RWPE1 (cell line): ENCODE measurements at regions of chr10 and their contacts with region 1.

Region 1: DNA sequence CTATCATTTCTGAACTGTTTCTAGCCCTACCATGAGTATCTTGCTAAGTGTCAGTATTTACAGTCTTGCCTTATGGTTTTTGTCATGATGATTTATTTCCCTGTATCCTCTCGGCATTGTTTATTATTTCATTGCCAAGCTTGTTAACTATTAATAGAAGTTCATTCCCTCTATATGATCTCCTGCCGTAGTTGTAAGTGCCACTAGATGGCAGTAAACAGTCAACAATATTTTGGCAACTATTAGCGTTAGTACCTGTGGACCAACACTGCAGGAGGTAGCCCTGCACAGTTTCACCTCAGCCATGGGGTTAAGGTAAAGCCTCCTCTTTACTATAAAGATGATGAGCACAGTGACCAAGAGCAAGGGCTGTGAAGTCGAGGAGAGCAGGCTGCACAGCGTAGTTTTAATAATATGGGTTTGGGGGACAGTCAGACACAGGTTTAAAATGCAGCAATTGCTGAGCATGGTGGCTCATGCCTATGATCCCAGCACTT is 26.1 kb upstream of the CCNJ start:
- DNase-seq: peak; percentile 74
- H3K27ac ChIP-seq: no peak overlapping the region
- CTCF ChIP-seq: peak; percentile 80

Region 2: GRCh38 chr10:95998255-95998784 is 18.9 kb before region 1 on chr10:
- CTCF ChIA-PET with region 1: interaction called, 11 read pairs
- POLR2A ChIA-PET with region 1: no interaction called
- DNase-seq: no peak
- H3K27ac ChIP-seq: no peak overlapping the region
- CTCF ChIP-seq: no peak

Region 3: DNA sequence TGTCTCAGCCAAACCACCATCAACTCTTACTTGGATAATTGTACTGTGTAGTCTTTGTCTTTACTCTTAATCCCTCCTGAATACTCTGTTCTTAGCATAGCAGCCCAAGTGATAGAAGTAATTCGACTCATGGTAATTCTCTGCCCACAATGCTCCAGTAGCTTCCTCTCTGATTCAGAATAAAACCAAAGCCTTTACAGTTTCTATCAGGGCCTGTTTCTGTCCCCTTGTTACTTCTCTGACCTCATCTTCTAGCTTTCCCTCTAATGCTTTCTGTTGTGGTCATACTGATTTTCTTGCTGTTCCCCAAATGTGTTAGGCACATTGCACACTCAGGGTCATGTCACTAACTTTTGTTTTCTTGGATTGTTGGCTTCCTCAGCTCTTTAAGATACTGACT is 120.9 kb after region 1 on chr10:
- CTCF ChIA-PET with region 1: no interaction called
- POLR2A ChIA-PET with region 1: no interaction called
- DNase-seq: no peak
- H3K27ac ChIP-seq: no peak overlapping the region
- CTCF ChIP-seq: no peak